ENCODE measurements at regions of chr10 and their contacts with region 1.

Region 1: DNA sequence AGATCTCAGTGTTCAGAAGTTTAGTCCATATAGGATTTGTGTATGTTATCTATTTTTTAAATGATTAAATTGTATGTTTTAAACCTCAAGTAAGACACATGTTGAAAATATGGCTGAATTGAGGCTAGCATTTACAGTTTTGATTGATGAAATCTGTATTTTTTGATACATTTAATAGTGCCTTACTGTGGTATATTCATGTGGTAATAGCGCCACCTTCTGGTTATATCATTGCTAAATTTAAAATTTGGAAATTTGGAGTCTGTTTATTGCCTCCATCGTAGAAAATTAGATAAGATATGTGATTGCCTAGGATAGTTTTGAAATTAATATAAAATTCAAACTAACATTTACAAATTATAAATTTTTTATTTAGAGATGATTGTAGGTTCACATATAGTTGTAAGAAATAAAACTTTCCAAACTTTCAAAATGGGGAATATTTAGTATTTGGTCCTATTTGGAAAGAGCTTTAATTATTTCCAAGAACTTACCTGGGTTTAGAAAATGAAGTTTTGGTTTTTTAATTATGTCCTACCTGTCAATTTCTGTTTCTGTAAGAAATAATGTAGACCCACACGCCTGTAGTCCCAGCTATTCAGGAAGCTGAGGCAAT is 19.1 kb upstream of the ARMS2 start:
- DNase-seq: no peak
- ATAC-seq: no peak
- H3K4me3 Mint-ChIP-seq: no peak overlapping the region
- H3K27ac Mint-ChIP-seq: no peak overlapping the region
- H3K4me1 Mint-ChIP-seq: no peaks in the 10 kb centered on the region
- H3K27me3 Mint-ChIP-seq: no peaks in the 10 kb centered on the region
- CTCF ChIP-seq: peak; percentile 92

Region 2: DNA sequence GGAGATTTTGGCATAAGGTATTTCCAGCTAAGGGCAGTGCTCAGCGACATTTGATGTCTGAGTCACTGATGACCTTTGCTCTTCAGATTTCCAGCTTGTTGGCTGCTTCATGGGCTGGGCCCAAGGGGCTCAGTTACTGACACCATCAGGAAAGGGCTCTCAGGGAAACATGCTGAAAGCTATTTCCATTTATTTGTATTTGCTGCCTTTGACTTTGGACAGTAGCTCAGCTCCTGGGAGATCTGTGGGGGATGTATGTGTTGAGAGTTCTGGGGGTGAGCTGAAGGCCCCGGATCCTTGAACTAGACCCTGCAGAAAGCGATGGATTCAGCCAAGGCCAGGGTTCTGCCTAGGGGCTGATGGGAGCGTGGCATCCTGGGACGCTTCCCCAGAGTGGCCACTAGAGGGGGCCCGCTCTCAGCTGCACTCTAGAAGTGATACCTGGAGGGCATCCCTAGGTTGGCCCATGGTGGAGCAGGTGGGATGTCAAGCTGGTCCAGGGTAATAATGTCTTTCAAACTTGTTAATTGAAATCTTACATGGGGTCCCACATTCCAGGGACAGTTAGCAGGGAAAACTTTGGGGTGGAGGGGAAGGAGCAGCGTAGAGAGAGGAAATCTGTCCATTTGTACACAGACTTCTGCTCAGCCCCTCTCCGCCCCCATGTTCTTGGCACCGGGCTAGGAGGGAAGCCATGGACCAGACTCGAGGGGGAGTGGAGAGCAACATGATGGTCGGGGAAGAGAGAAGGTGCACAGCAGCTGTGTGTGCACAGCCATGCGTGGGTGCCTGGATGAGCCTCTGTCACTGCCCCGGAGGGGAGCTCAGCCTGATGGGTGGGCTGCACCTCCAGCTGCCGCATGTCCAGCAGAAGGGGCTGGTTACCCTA is 167.2 kb before region 1 on chr10:
- CTCF ChIA-PET with region 1: interaction called, 18 read pairs
- POLR2A ChIA-PET with region 1: no interaction called
- intact Hi-C with region 1: no loop called
- DNase-seq: peak; percentile 61
- ATAC-seq: peak; percentile 87
- H3K4me3 Mint-ChIP-seq: no peak overlapping the region
- H3K27ac Mint-ChIP-seq: no peak overlapping the region
- H3K4me1 Mint-ChIP-seq: no peaks in the 10 kb centered on the region
- H3K27me3 Mint-ChIP-seq: peaks cover 10% of the 10 kb centered on the region
- CTCF ChIP-seq: peak; percentile 82

Region 3: DNA sequence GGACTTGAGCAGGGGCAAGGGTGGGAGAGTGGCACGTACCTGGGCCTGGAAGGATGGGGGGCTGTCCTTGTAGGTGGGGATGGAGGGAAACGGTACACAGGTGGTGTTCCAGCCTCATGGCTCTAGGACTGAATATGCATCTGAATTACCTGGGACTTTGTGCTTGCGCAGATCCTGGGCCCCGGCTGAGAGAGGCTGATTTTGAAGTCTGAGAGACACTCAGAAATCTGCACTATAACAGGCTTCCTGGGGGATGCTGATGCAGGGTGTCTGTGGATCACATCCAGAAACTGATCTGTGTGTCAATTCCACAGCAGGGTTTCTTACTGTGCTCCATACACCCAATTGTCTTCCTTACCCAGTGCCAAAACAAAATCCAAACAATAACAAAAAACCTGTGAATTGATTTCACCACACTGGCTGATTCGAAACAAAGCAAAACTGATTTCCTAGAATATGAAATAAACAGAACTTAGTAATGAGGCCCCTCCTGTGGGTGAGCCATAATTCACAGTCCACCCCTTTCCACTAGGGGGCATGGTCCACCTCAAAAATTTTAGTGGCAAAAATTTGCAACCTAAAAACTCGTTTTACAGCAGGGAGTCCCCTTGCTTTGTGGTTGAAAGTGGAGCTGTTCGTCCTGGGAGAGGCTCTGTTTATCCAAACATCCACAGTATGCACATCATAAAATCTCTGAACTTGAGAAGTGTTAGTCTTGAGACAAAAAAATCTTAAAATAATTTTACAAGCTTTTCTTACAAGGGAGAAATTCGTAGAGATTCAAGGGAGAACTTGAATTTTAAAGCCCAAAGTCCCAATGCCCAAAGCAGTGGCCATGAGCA is 92.8 kb before region 1 on chr10:
- CTCF ChIA-PET with region 1: interaction called, 132 read pairs
- POLR2A ChIA-PET with region 1: no interaction called
- intact Hi-C with region 1: loop called (anchors 1 kb)
- DNase-seq: peak; percentile 74
- ATAC-seq: peak; percentile 79
- H3K4me3 Mint-ChIP-seq: no peak overlapping the region
- H3K27ac Mint-ChIP-seq: no peak overlapping the region
- H3K4me1 Mint-ChIP-seq: peaks cover 11% of the 10 kb centered on the region
- H3K27me3 Mint-ChIP-seq: peaks cover 1% of the 10 kb centered on the region
- CTCF ChIP-seq: peak; percentile 84

Region 4: DNA sequence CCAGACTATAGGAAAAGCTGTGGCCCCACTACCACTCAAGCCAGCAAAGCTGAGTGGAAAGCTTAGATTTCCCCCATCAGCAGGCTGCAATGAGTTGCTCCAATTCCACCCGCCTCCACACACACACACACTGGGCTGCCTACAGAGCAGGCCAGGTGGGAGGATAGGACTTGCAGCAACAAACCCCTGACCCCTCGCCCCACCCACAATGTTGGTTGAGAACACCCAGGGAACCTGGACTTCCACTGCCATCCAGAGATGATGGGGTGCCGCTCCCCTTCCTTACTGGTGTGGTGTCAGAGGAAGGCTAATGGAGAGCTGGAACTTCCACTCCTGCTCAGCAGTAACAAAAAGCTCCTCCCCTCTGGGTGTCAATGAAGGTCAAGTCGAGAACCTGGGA is 77.6 kb before region 1 on chr10:
- CTCF ChIA-PET with region 1: interaction called, 11 read pairs
- POLR2A ChIA-PET with region 1: interaction called, 3 read pairs
- intact Hi-C with region 1: no loop called
- DNase-seq: no peak
- ATAC-seq: no peak
- H3K4me3 Mint-ChIP-seq: no peak overlapping the region
- H3K27ac Mint-ChIP-seq: no peak overlapping the region
- H3K4me1 Mint-ChIP-seq: peaks cover under 1% of the 10 kb centered on the region
- H3K27me3 Mint-ChIP-seq: peaks cover 3% of the 10 kb centered on the region
- CTCF ChIP-seq: no peak

Region 5: DNA sequence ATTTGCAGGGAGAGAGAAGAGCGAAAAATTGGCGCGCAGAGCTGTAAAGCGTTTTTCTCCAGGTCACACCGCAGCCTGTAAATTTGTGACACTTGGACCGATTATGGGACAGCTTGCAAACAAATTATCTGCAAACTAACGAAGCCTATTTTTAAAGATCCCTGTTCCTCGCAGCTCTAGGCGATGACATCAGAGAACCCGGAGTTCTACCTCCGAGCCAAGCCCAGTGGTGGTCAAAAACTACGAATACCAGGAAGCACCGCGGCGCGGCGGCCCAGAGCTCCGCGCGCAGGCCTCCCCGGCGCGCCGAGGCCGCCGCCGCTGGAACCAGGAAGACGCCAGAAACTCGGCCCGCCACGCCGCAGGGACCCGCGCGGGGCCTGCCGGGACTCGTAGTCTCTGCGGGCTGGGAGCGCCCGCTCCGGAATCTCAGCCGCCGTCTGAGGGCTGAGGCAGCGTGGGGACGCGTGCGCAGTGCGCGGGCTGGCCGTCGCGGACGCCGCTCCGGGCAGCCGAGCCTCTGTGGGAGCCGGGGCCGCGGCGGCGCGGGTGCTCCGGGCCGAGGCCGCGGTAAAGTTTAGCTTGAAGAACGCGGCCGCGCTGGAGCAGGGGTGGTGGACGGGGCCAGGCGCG is 61.0 kb before region 1 on chr10 and contains the start of gene PLEKHA1:
- CTCF ChIA-PET with region 1: interaction called, 24 read pairs
- POLR2A ChIA-PET with region 1: interaction called, 3 read pairs
- intact Hi-C with region 1: no loop called
- DNase-seq: peak; percentile 93
- ATAC-seq: peak; percentile 86
- H3K4me3 Mint-ChIP-seq: peak within 1 kb of the TSS; percentile 94
- H3K27ac Mint-ChIP-seq: peak within 1 kb of the TSS; percentile 98
- H3K4me1 Mint-ChIP-seq: peaks cover 41% of the 10 kb centered on the region
- H3K27me3 Mint-ChIP-seq: peaks cover 11% of the 10 kb centered on the region
- CTCF ChIP-seq: no peak
- total RNA-seq, gene PLEKHA1: 17.0 to 17.4 TPM

Region 6: GRCh38 chr10:122450353-122450990 is 15.2 kb after region 1 on chr10:
- CTCF ChIA-PET with region 1: interaction called, 10 read pairs
- POLR2A ChIA-PET with region 1: no interaction called
- intact Hi-C with region 1: no loop called
- DNase-seq: no peak
- ATAC-seq: no peak
- H3K4me3 Mint-ChIP-seq: no peak overlapping the region
- H3K27ac Mint-ChIP-seq: no peak overlapping the region
- H3K4me1 Mint-ChIP-seq: no peaks in the 10 kb centered on the region
- H3K27me3 Mint-ChIP-seq: peaks cover 7% of the 10 kb centered on the region
- CTCF ChIP-seq: no peak